Activated T-helper 1 cell treated with anti-CD3 and anti-CD28 coated beads, Interleukin-12 subunit alpha, Interleukin-12 subunit beta, Interleukin-2, Interleukin-4 antibody, amounts not matched to agents 30 ng/mL and 10 ng/mL and 1 ng/mL, durations not matched to agents 14 hours and 24 hours and 36 hours (primary cell): ENCODE measurements at regions of chr19 and their contacts with region 1.

Region 1: GRCh38 chr19:38647368-38647965 is at the start of gene ACTN4:
- DNase-seq: peak; percentile 100
- H3K4me3 Mint-ChIP-seq: peak within 1 kb of the TSS; percentile 94
- H3K27ac Mint-ChIP-seq: peak within 1 kb of the TSS; percentile 82
- H3K4me1 Mint-ChIP-seq: peaks cover 38% of the 10 kb centered on the region
- H3K27me3 Mint-ChIP-seq: no peaks in the 10 kb centered on the region
- total RNA-seq, gene ACTN4: 281 and 287 TPM in 2 replicates

Region 2: DNA sequence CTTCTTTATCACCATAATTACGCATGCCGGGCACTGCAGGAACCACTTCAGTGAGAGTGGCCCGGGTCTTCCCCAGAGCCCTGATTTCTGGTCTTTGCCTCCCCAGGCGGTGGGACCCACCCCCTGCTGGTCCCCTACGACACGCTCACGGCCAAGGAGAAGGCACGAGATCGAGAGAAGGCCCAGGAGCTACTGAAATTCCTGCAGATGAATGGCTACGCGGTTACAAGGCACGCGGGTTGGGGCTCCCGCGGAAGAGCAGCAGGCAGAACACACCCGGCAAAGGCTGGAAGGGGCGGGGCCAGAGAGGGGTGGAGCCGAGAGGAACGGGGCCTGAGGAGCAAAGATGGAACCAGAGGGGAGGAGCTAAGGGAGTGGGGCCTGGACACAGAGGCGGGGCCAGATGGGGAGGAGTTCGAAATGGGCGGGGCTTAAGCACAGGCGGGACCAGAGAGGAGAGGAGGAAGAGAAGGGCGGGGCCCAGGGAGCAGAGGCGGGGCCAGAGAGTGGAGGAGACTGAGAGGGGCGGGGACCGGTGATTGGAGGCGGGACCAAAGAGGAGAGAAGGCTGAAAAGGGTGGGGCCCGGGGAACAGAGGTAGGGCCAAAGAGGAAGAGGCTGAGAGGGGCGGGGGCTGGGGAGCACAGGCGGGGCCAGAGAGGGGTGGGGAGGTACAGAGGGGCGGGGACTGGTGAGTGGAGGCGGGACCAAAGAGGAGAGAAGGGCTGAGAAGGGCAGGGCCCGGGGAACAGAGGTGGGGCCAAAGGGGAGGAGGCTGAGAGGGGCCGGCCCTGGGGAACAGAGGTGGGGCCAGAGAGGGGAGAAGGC is 140.5 kb before region 1 on chr19:
- intact Hi-C with region 1: loop called (anchors 1 kb)
- DNase-seq: peak; percentile 84
- H3K4me3 Mint-ChIP-seq: no peak overlapping the region
- H3K27ac Mint-ChIP-seq: no peak overlapping the region
- H3K4me1 Mint-ChIP-seq: no peaks in the 10 kb centered on the region
- H3K27me3 Mint-ChIP-seq: peaks cover 13% of the 10 kb centered on the region

Region 3: DNA sequence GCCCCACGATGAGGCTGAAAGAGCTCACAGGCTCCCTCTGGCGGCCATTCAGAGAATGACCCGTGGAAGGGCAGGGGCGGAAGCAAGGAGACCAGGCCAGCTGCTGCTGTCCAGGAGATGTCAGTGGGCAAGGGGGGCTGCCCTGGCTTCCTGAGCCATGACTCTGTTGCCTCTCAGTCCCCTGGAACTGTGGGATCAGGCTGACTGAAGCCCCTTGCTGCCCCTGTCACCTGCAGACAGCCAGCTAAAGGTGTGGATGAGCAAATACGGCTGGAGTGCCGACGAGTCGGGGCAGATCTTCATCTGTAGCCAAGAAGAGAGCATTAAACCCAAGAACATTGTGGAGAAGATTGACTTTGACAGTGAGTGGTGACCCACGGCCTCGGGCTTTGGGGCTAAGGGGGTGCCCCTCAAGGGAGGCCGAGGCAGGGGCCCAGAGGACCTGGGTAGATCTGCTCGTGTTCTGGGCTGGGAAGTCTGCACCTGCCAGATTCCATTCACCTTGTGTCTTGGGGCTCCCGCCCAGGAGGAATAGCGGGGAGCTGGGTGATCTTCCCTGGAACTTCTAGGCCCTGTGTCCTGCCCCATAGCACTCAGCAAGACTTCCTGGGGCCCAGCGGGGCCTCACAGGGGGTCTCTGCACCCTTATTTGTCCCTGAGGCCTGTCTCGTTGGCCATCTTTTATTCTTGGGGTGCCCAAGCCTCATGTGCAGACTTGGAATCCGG is 12.5 kb before region 1 on chr19:
- intact Hi-C with region 1: loop called (anchors 1 kb)
- DNase-seq: peak; percentile 68
- H3K4me3 Mint-ChIP-seq: peak overlapping the region; percentile 43
- H3K27ac Mint-ChIP-seq: peak overlapping the region; percentile 83
- H3K4me1 Mint-ChIP-seq: peaks cover 36% of the 10 kb centered on the region
- H3K27me3 Mint-ChIP-seq: no peaks in the 10 kb centered on the region

Region 4: GRCh38 chr19:38658462-38659306 is 11.2 kb after region 1 on chr19:
- intact Hi-C with region 1: loop called (anchors 1 kb)
- DNase-seq: no peak
- H3K4me3 Mint-ChIP-seq: no peak overlapping the region
- H3K27ac Mint-ChIP-seq: no peak overlapping the region
- H3K4me1 Mint-ChIP-seq: peaks cover 63% of the 10 kb centered on the region
- H3K27me3 Mint-ChIP-seq: no peaks in the 10 kb centered on the region

Region 5: GRCh38 chr19:38683393-38684080 is 36.1 kb after region 1 on chr19:
- intact Hi-C with region 1: loop called (anchors 5 kb)
- DNase-seq: no peak
- H3K4me3 Mint-ChIP-seq: peak overlapping the region; percentile 31
- H3K27ac Mint-ChIP-seq: peak overlapping the region; percentile 23
- H3K4me1 Mint-ChIP-seq: peaks cover 92% of the 10 kb centered on the region
- H3K27me3 Mint-ChIP-seq: no peaks in the 10 kb centered on the region

Region 6: GRCh38 chr19:38899447-38900219 is 252.2 kb after region 1 on chr19 and contains the starts of genes NFKBIB and SIRT2:
- intact Hi-C with region 1: loop called (anchors 1 kb)
- DNase-seq: peak; percentile 100
- H3K4me3 Mint-ChIP-seq: peak within 1 kb of the TSS; percentile 93
- H3K27ac Mint-ChIP-seq: peak within 1 kb of the TSS; percentile 94
- H3K4me1 Mint-ChIP-seq: peaks cover 42% of the 10 kb centered on the region
- H3K27me3 Mint-ChIP-seq: no peaks in the 10 kb centered on the region
- total RNA-seq, gene NFKBIB: 98.1 and 102 TPM in 2 replicates
- total RNA-seq, gene SIRT2: 28.3 and 28.7 TPM in 2 replicates

Region 7: GRCh38 chr19:39264306-39265290 is 617.1 kb after region 1 on chr19:
- intact Hi-C with region 1: no loop called
- DNase-seq: no peak
- H3K4me3 Mint-ChIP-seq: no peak overlapping the region
- H3K27ac Mint-ChIP-seq: no peak overlapping the region
- H3K4me1 Mint-ChIP-seq: no peaks in the 10 kb centered on the region
- H3K27me3 Mint-ChIP-seq: peaks cover 37% of the 10 kb centered on the region